ENCODE measurements at regions of chr1 and their contacts with region 1.

Region 1: DNA sequence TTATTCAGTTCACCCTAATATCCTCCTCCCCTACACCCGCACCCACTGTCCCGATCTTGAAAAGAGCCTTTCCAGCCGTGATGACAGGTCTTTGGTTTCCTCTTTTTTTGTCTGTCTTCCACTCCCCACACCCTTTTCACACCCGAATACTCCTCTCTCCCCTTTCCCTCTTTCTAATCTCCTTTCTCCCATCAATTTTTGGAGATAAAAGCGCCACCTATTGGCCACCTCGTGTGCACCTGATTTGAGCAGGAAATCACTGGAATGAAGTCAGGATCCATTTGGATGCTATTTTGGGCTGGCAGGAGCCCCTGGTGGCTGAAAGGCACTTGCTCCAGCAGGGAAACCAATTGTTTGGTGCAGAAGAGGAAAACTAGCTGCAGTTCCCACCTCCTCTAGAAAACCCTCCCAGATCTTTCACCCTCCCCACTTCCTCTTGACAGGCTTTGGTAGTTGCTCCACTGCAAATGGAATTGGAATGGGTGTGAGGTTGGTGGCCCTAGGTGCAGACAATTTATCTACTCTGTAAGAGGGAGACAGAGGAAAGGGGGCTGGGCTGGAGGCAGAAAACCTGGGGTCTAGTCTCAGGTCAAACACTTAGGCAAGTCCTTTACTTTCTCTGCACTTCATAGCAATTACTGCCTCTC is 8.4 kb downstream of the FOXE3 start:
- DNase-seq: peak; percentile 63
- ATAC-seq: peak; percentile 91
- H3K4me3 ChIP-seq: no peak overlapping the region
- H3K27ac ChIP-seq: no peak overlapping the region
- H3K4me1 ChIP-seq: peaks cover 3 to 11% of the 10 kb centered on the region in 2 experiments; a peak in 2 of 4 replicates
- H3K27me3 ChIP-seq: no peaks in the 10 kb centered on the region
- CTCF ChIP-seq: peak; percentile 91 to 98 (median 96)
- POLR2A ChIP-seq: no peak
- RAD21 ChIP-seq: peak; percentile 70

Region 2: GRCh38 chr1:47192458-47193384 is 231.7 kb before region 1 on chr1:
- CTCF ChIA-PET with region 1: no interaction called
- POLR2A ChIA-PET with region 1: no interaction called
- RAD21 ChIA-PET with region 1: no interaction called
- intact Hi-C with region 1: loop called (anchors 1 kb)
- DNase-seq: peak; percentile 42
- ATAC-seq: peak; percentile 85
- H3K4me3 ChIP-seq: no peak overlapping the region
- H3K27ac ChIP-seq: no peak overlapping the region
- H3K4me1 ChIP-seq: peaks cover 3 to 19% of the 10 kb centered on the region in 2 experiments; a peak in 3 of 4 replicates
- H3K27me3 ChIP-seq: no peaks in the 10 kb centered on the region
- CTCF ChIP-seq: peak; percentile 76 to 99 (median 98)
- POLR2A ChIP-seq: no peak
- RAD21 ChIP-seq: peak; percentile 85

Region 3: GRCh38 chr1:47231301-47232186 is 192.9 kb before region 1 on chr1:
- CTCF ChIA-PET with region 1: no interaction called
- POLR2A ChIA-PET with region 1: no interaction called
- RAD21 ChIA-PET with region 1: no interaction called
- intact Hi-C with region 1: no loop called
- DNase-seq: no peak
- ATAC-seq: no peak
- H3K4me3 ChIP-seq: no peak overlapping the region
- H3K27ac ChIP-seq: no peak overlapping the region
- H3K4me1 ChIP-seq: no peaks in the 10 kb centered on the region
- H3K27me3 ChIP-seq: no peaks in the 10 kb centered on the region
- CTCF ChIP-seq: no peak
- POLR2A ChIP-seq: no peak
- RAD21 ChIP-seq: no peak

Region 4: DNA sequence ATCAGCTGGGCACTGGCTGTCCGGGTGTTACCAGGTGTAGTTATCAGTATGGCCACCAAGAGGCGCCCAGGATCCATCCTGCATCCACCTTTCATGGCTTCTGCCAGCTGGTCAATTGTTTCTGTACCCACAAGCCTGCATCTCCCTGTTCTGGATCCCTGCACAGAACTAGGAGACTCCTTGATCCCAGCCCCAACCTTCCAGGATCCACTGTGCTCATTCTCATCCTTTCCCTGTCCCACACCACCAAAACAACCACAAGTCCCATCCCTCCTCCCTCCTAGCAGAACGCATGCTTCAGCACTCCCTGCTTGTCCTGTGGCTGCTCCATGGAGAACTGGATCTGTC is 35.6 kb before region 1 on chr1:
- CTCF ChIA-PET with region 1: interaction called, 14 read pairs
- POLR2A ChIA-PET with region 1: no interaction called
- RAD21 ChIA-PET with region 1: no interaction called
- intact Hi-C with region 1: loop called (anchors 1 kb)
- DNase-seq: peak; percentile 35
- ATAC-seq: peak; percentile 91
- H3K4me3 ChIP-seq: no peak overlapping the region
- H3K27ac ChIP-seq: no peak overlapping the region
- H3K4me1 ChIP-seq: no peaks in the 10 kb centered on the region
- H3K27me3 ChIP-seq: no peaks in the 10 kb centered on the region
- CTCF ChIP-seq: peak; percentile 73 to 80 (median 79)
- POLR2A ChIP-seq: no peak
- RAD21 ChIP-seq: peak; percentile 87